Naive thymus-derived CD8-positive, alpha-beta T cell (primary cell): ENCODE measurements at regions of chr11 and their contacts with region 1.

Region 1: GRCh38 chr11:3947061-3947460 is 91.6 kb downstream of the STIM1 start:
- DNase-seq: peak in 9 of 10 donors; percentile 36 to 84 (median 73)
- ATAC-seq: peak; percentile 73 to 83
- H3K4me3 Mint-ChIP-seq: peak overlapping the region; percentile 66 to 88 (median 82)
- H3K27ac Mint-ChIP-seq: peak overlapping the region; percentile 77 to 99 (median 95)
- H3K4me1 Mint-ChIP-seq: peaks cover 58 to 97% (median 95%) of the 10 kb centered on the region in 4 donors
- H3K27me3 Mint-ChIP-seq: no peaks in the 10 kb centered on the region

Region 2: GRCh38 chr11:4072668-4073285 is 125.7 kb after region 1 on chr11:
- POLR2A ChIA-PET with region 1: interaction called, 10 read pairs
- DNase-seq: peak in 9 of 10 donors; percentile 39 to 79 (median 59)
- ATAC-seq: peak; percentile 84 to 85
- H3K4me3 Mint-ChIP-seq: no peak overlapping the region
- H3K27ac Mint-ChIP-seq: peak overlapping the region; percentile 36 to 91 (median 84)
- H3K4me1 Mint-ChIP-seq: peaks cover 31 to 57% (median 48%) of the 10 kb centered on the region in 4 donors
- H3K27me3 Mint-ChIP-seq: no peaks in the 10 kb centered on the region

Region 3: GRCh38 chr11:4102711-4103110 is 155.7 kb after region 1 on chr11:
- POLR2A ChIA-PET with region 1: no interaction called
- DNase-seq: no peak
- ATAC-seq: no peak
- H3K4me3 Mint-ChIP-seq: peak overlapping the region in 1 of 10 donors; percentile 0
- H3K27ac Mint-ChIP-seq: peak overlapping the region in 3 of 10 donors; percentile 2 to 35 (median 6)
- H3K4me1 Mint-ChIP-seq: peaks cover 8 to 31% (median 17%) of the 10 kb centered on the region in 4 donors
- H3K27me3 Mint-ChIP-seq: no peaks in the 10 kb centered on the region